ENCODE measurements at regions of chr2 and their contacts with region 1.

Region 1: DNA sequence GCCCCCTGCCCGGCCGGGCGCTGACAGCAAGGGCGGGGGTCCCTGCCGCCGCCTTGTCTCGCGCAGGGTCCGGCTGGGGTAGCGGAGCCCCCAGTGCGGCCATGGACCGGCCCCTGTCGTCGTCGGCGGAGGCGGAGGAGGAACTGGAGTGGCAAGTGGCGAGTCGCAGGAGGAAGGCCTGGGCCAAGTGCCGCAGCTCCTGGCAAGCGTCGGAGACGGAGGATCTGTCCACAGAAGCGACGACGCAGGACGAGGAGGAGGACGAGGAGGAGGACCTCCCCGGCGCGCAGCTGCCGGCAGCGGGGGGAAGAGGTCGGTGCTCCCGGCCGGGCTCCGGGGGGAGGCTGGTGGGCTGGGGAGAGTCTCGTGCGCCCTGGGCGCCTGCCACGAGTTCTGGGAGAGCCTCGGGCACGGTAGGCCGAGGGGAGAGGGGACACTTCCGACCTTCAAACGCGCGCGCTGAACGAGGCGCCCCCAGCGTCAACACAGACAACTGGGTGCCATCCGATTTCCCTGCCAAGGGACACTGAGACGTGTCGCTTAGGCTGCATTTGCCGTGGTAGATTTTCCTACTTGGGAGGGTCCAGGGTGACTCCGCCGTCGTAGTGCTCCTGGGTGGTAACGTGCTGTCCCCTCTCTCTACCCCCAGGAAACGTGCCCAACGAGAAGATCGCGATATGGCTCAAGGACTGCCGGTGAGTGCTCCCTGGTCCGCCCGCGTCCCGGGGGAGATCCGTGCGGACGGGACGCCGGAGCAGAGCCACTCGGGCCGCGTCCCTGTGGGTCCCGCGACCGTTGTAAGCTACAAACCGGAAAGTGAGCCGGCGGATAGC is 652 bp downstream of the ITPRID2 start:
- DNase-seq: peak; percentile 82
- H3K4me3 ChIP-seq: peak overlapping the region; percentile 80 to 95 (median 92)
- H3K27ac ChIP-seq: peak overlapping the region; percentile 80
- H3K4me1 ChIP-seq: peaks cover 42% of the 10 kb centered on the region
- H3K27me3 ChIP-seq: no peaks in the 10 kb centered on the region
- CTCF ChIP-seq: peak in 1 of 2 donors; percentile 2
- POLR2A ChIP-seq: peak; percentile 35

Region 2: GRCh38 chr2:180980106-180980942 is 911.9 kb before region 1 on chr2 and contains the start of gene UBE2E3:
- CTCF ChIA-PET with region 1: no interaction called
- POLR2A ChIA-PET with region 1: no interaction called
- dilution Hi-C with region 1: no loop called
- intact Hi-C with region 1: loop called (anchors 10 kb)
- DNase-seq: peak; percentile 80
- H3K4me3 ChIP-seq: peak within 1 kb of the TSS; percentile 82 to 98 (median 96)
- H3K27ac ChIP-seq: peak within 1 kb of the TSS; percentile 82
- H3K4me1 ChIP-seq: peaks cover 39% of the 10 kb centered on the region
- H3K27me3 ChIP-seq: no peaks in the 10 kb centered on the region
- CTCF ChIP-seq: peak; percentile 52 to 80
- POLR2A ChIP-seq: peak; percentile 77
- total RNA-seq, gene UBE2E3: 81.5 and 89.2 TPM in 2 replicates

Region 3: DNA sequence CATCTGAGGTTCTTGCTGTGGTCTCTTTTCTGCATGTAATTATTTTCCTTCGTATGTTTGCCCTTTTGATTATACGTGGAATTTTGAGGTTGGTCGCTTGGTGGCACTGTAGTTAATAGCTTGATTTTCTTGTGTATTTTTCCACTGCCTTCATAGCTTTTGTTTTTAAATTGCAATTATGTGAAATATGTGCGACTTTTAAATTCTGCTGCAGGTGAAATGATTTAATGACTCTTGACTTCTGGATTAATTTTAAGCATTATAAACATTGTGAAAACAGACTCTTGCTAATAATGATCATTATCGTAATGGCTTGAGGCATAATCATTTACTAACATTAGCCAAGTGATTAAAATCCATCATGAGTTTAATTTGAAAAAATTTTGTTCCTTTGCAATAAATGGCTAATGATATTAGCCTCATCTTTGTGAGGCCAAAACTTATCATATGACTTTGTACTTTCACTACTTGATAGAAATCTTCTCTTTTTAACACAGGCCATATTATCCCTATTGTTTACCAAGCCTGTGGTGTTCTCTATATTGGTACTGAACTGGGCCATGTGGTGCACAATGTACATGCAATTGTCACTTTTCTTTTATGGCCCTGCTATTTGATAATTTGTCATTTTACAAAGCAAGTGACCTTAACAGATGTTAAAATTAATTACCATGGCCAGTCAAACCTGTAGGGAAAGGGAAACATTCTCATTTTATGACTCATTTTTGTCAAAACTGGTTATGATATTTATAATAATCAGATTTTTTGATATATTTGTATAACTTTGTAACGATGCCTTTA is 149.1 kb before region 1 on chr2:
- CTCF ChIA-PET with region 1: interaction called, 415 read pairs
- POLR2A ChIA-PET with region 1: interaction called, 8 read pairs
- dilution Hi-C with region 1: no loop called
- intact Hi-C with region 1: loop called (anchors 1 kb)
- DNase-seq: peak; percentile 83
- H3K4me3 ChIP-seq: no peak overlapping the region
- H3K27ac ChIP-seq: peak overlapping the region; percentile 34
- H3K4me1 ChIP-seq: peaks cover 15% of the 10 kb centered on the region
- H3K27me3 ChIP-seq: no peaks in the 10 kb centered on the region
- CTCF ChIP-seq: peak; percentile 37 to 39
- POLR2A ChIP-seq: no peak

Region 4: GRCh38 chr2:181805228-181806038 is 86.7 kb before region 1 on chr2:
- CTCF ChIA-PET with region 1: interaction called, 3 read pairs
- POLR2A ChIA-PET with region 1: no interaction called
- dilution Hi-C with region 1: no loop called
- intact Hi-C with region 1: loop called (anchors 1 kb)
- DNase-seq: peak; percentile 91
- H3K4me3 ChIP-seq: peak overlapping the region in 1 of 3 experiments; percentile 22
- H3K27ac ChIP-seq: peak overlapping the region; percentile 85
- H3K4me1 ChIP-seq: peaks cover 37% of the 10 kb centered on the region
- H3K27me3 ChIP-seq: no peaks in the 10 kb centered on the region
- CTCF ChIP-seq: no peak
- POLR2A ChIP-seq: no peak

Region 5: DNA sequence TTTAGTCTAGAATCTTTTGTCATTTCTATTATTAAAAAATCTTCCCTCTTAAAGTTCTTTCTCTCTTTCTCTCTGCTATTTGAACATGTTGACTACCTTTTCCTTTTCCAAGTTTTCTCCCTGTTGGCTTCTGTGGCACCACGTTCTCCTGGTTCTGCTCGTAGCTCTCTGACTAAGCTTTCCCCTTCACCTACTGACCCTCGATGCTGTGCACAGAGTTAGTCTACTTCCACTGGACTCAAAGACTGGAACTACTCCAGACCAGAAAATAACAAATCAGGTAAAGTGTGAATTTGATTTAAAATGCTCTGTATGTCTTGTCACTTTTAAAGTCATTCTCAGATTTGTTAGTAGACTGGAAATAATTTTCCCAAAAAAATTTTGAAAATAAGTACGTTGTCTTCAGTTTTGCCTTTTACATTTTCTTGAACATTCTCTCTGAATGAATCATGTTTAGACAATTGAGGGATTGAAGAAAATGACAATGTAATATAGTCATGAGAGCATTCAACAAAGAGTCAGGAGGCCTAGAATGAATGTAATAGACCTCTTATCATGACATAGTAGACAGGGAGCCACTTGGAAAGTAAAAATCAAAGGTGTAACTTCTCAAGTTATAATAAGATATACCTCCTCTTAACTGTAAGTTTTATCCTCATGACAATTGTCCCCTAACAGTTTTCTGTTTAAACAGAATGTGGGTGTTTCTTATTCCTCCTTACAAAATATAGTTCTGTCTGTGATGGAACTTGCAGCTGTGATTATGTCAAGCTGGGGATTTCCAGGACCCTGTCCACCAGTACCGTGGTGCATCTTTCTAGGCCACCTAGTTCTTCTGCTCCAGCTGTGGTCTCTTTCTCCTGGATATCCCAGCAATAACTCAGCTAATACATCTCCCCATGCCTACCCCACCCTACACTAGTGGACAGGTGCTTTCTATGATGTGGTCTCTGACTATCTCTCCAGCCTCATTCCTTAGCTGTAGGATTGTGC is 24.8 kb after region 1 on chr2:
- CTCF ChIA-PET with region 1: interaction called, 14 read pairs
- POLR2A ChIA-PET with region 1: no interaction called
- dilution Hi-C with region 1: no loop called
- intact Hi-C with region 1: no loop called
- DNase-seq: peak; percentile 79
- H3K4me3 ChIP-seq: no peak overlapping the region
- H3K27ac ChIP-seq: peak overlapping the region; percentile 14
- H3K4me1 ChIP-seq: peaks cover 38% of the 10 kb centered on the region
- H3K27me3 ChIP-seq: no peaks in the 10 kb centered on the region
- CTCF ChIP-seq: no peak
- POLR2A ChIP-seq: no peak

Region 6: GRCh38 chr2:182050333-182051135 is 158.4 kb after region 1 on chr2:
- CTCF ChIA-PET with region 1: no interaction called
- POLR2A ChIA-PET with region 1: no interaction called
- dilution Hi-C with region 1: no loop called
- intact Hi-C with region 1: no loop called
- DNase-seq: no peak
- H3K4me3 ChIP-seq: no peak overlapping the region
- H3K27ac ChIP-seq: no peak overlapping the region
- H3K4me1 ChIP-seq: no peaks in the 10 kb centered on the region
- H3K27me3 ChIP-seq: no peaks in the 10 kb centered on the region
- CTCF ChIP-seq: no peak
- POLR2A ChIP-seq: no peak

Region 7: DNA sequence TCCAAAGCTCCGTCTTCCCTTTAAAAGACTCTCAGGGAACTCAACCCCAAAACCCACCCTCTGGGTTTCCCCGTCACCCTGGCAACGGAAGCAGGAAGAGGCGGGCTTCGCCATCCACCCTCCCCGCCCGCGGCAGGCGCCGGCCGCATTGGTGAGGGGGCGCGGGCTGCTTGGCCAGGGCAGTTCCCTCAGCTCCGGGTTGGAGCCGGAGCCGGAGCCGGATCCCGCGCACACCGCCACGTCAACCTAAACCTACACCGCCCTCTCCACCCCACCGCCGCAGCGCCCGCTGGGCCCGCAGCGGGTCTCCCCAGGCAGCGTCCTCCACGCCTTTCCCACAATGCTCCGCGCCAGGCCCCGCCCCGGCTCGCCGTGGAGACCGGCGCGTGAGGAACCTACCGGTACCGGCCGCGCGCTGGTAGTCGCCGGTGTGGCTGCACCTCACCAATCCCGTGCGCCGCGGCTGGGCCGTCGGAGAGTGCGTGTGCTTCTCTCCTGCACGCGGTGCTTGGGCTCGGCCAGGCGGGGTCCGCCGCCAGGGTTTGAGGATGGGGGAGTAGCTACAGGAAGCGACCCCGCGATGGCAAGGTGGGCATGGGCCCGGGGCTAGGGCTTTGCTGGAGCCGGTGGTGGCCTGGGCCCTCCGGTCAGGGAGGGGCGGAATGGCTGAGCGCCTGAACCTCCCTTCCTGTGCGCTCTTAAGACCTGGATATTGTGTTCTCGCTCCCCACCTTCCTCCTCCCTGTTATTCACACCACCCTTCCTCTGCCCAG is 823.9 kb after region 1 on chr2 and contains the start of gene DNAJC10:
- CTCF ChIA-PET with region 1: no interaction called
- POLR2A ChIA-PET with region 1: no interaction called
- dilution Hi-C with region 1: no loop called
- intact Hi-C with region 1: loop called (anchors 1 kb)
- DNase-seq: peak; percentile 98
- H3K4me3 ChIP-seq: peak within 1 kb of the TSS; percentile 65 to 95 (median 95)
- H3K27ac ChIP-seq: peak within 1 kb of the TSS; percentile 88
- H3K4me1 ChIP-seq: peaks cover 32% of the 10 kb centered on the region
- H3K27me3 ChIP-seq: no peaks in the 10 kb centered on the region
- CTCF ChIP-seq: peak in 1 of 2 donors; percentile 0
- POLR2A ChIP-seq: peak; percentile 95
- total RNA-seq, gene DNAJC10: 171 and 201 TPM in 2 replicates

Measured in endothelial cell of umbilical vein (primary cell).